A549 (cell line): ENCODE measurements at regions of chr1 and their contacts with region 1.

Region 1: GRCh38 chr1:92831762-92832536 is at the start of gene RPL5:
- DNase-seq: peak; percentile 92 to 97
- ATAC-seq: peak; percentile 97 to 99
- H3K4me3 ChIP-seq: peak within 1 kb of the TSS; percentile 96
- H3K27ac ChIP-seq: peak within 1 kb of the TSS; percentile 94 to 98
- H3K4me1 ChIP-seq: peaks cover 31% of the 10 kb centered on the region
- CTCF ChIP-seq: peak; percentile 72
- EP300 ChIP-seq: no peak
- POLR2A ChIP-seq: peak; percentile 94
- RAD21 ChIP-seq: peak; percentile 9 to 16; a peak in 2 of 5 replicates
- polyA plus RNA-seq, gene RPL5: 1,649 and 2,015 TPM in 2 replicates

Region 2: GRCh38 chr1:92749024-92749634 is 82.8 kb before region 1 on chr1:
- CTCF ChIA-PET with region 1: interaction called, 12 read pairs
- POLR2A ChIA-PET with region 1: interaction called, 5 read pairs
- DNase-seq: peak; percentile 36 to 70
- ATAC-seq: peak; percentile 66 to 85; a peak in 5 of 6 replicates
- H3K4me3 ChIP-seq: no peak overlapping the region
- H3K27ac ChIP-seq: no peak overlapping the region
- H3K4me1 ChIP-seq: no peaks in the 10 kb centered on the region
- CTCF ChIP-seq: peak; percentile 52
- EP300 ChIP-seq: no peak
- POLR2A ChIP-seq: no peak
- RAD21 ChIP-seq: peak; percentile 37 to 69; a peak in 4 of 5 replicates

Region 3: DNA sequence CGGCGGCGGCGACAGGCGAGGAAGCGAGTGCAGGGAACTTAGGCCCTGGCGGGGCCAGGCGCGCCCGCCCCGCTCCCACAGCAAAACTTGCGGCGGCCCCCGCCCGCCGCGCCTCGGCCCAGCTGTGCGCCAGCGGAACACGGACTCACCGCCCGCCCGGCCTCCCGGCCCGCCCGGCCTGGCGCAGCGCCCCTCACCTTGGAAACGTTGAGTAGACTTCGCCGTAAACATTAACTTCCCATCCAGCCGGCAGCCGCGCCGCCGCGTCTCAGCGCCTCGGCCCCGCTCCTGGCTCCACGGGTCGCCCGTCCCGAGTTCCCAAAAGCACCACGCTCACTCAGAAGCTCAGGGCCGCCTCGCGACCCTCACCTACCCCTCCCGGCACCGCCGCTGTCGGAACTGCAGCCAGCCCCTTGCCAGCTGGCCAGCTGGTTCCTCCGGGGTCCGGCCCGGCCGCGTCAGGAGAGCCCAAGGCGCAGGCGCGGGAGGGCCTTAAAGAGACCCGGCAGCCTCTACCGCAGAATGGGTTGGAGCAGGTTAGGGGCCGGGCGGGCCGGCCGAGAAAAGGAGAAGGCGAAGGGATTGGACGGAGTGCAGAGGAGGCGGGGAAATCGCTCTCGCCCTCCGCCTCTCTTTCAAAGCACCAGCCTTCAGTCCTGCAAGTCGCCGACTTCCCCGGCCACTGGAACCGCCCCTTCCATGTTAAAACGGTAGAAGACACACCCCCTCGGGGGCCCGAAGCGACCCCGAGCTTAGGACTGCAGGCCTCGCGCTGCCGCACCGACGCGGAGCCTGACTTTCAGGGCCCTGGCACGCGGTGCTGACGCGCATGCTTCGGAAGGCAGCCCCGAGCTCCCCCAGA is 47.1 kb before region 1 on chr1 and contains the start of gene EVI5:
- CTCF ChIA-PET with region 1: interaction called, 5 read pairs
- POLR2A ChIA-PET with region 1: interaction called, 11 read pairs
- DNase-seq: peak; percentile 77 to 94
- ATAC-seq: peak; percentile 97 to 99
- H3K4me3 ChIP-seq: peak within 1 kb of the TSS; percentile 95
- H3K27ac ChIP-seq: peak within 1 kb of the TSS; percentile 94
- H3K4me1 ChIP-seq: 0 out of 3 replicates have a peak, but pooled peaks cover 3% of the 10 kb centered on the region
- CTCF ChIP-seq: no peak
- EP300 ChIP-seq: no peak
- POLR2A ChIP-seq: peak; percentile 77
- RAD21 ChIP-seq: no peak
- polyA plus RNA-seq, gene EVI5: 8.2 and 10.4 TPM in 2 replicates

Region 4: DNA sequence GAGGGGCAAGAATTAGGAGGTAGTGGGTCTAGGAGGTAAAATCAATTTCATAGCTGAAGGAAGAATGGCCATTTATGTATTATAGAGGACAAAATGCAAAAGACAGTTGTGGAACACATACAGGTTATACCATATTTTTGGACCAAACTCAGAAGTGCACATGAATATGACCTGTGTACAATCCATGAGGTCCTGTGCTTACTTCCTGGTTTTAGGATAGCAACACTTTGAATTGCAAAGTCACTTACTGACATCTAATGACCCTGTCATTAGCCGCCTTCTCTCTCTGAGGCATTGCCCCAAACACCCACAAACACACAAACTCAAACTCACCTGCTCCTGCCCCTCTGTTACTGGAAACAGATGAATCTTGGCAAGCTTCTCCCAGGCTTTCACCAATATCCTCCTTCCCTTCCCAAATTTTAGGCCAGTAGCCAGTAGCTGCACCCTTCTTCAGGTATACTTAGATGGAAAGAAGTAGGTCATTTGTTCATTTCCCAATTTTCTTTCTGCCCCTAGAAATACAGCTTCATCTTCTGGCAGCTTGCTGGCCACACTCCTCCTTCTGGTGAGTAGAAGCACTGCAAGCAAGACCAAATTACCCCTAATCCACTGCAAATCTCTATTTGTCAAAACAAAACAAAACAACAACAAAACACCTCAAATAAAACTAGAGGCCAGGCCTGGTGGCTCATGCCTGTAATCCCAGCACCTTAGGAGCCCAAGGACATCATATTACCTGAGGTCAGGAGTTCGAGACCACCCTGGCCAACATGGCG is 13.8 kb before region 1 on chr1:
- CTCF ChIA-PET with region 1: interaction called, 10 read pairs
- POLR2A ChIA-PET with region 1: interaction called, 5 read pairs
- DNase-seq: peak; percentile 23 to 46
- ATAC-seq: peak; percentile 54 to 67; a peak in 4 of 6 replicates
- H3K4me3 ChIP-seq: no peak overlapping the region
- H3K27ac ChIP-seq: no peak overlapping the region
- H3K4me1 ChIP-seq: no peaks in the 10 kb centered on the region
- CTCF ChIP-seq: peak; percentile 29; the same call in 2 of the 3 replicates
- EP300 ChIP-seq: no peak
- POLR2A ChIP-seq: no peak
- RAD21 ChIP-seq: peak; percentile 22 to 44; a peak in 3 of 5 replicates

Region 5: GRCh38 chr1:92843429-92844352 is 11.7 kb after region 1 on chr1:
- CTCF ChIA-PET with region 1: interaction called, 7 read pairs
- POLR2A ChIA-PET with region 1: interaction called, 13 read pairs
- DNase-seq: no peak
- ATAC-seq: peak in 1 of 2 experiments; percentile 20; a peak in 2 of 6 replicates
- H3K4me3 ChIP-seq: no peak overlapping the region
- H3K27ac ChIP-seq: no peak overlapping the region
- H3K4me1 ChIP-seq: peaks cover 6% of the 10 kb centered on the region; the same call in 2 of the 3 replicates
- CTCF ChIP-seq: no peak
- EP300 ChIP-seq: no peak
- POLR2A ChIP-seq: no peak
- RAD21 ChIP-seq: no peak